ENCODE measurements at regions of chr18 and their contacts with region 1.

Region 1: DNA sequence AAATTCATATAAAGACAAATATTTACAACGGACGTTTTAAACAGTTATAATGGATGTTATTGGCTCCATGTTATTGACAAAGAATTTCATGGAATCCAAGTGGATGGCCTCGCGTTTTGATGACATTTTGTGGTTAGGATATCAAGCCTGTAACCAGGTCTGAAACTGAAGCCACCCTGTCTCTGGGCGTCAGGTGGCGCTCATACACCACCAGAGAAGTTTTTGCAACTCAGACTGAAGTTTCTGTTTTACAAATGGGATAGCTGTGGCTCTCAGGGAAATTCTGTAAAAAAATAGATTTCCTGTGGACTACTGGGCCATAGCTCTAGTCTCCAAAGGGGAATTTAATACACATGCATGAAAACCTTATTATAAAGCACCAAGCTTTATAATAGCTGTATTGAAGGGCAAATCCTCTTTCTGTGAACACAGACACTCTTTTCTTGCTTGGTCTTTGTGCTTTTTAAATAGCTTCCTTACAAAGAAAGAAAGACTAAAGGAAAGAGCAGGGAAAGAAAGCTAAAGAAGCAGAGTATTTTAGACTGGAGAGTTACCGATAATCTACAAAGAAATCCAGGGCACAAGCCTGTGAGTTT is 86.7 kb downstream of the C18orf54 start:
- DNase-seq: no peak
- H3K4me3 ChIP-seq: no peak overlapping the region
- H3K27ac ChIP-seq: no peak overlapping the region
- H3K4me1 ChIP-seq: no peaks in the 10 kb centered on the region
- H3K27me3 ChIP-seq: no peaks in the 10 kb centered on the region
- CTCF ChIP-seq: peak; percentile 75 to 80 (median 77)

Region 2: DNA sequence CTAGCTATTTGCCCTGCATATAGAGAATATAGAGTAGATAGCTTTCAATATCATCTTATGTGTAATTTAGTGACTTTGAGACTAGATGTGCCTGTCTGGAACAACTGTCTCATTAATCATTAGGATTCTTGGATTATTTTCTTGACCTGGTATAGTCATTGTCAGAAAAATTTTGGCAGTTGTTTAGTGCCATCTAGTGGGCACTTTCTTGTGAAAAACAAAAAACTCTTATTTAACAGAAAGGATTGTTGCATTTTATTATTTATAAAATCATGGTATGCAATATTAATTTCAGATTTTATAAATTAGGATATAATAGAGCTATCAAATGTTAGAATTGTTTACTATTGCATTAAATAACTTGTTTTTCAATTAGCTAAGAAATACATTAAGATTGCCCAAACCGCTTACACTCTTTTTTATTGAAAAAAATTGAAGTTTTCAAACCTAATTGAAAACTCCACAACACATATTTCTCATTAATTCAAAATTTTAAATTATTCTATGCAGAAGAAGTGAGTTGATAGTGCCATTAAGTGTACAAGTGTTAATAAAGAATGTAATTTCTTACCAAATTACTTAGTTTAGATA is 227.0 kb after region 1 on chr18:
- dilution Hi-C with region 1: loop called (anchors 25 kb)
- DNase-seq: no peak
- H3K4me3 ChIP-seq: no peak overlapping the region
- H3K27ac ChIP-seq: no peak overlapping the region
- H3K4me1 ChIP-seq: no peaks in the 10 kb centered on the region
- H3K27me3 ChIP-seq: no peaks in the 10 kb centered on the region
- CTCF ChIP-seq: no peak

Region 3: DNA sequence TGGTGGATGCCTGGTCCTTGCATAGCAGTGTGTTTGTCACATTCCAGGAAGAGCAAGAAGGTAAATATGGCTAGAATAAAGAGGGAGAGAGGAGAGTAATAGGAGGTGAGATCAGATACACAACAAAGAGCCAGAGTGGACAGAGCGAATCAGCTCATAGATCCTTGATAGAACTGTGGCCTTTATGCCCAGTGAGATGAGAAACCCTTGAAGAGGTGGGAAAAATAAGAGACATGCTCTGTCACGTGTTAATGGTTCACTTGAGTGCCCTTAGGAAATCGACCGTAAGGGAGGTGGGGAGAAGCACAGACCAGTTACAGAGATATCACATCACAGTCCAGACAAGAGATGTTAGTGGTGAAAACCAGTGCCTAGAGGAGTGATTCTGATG is 299.2 kb after region 1 on chr18:
- dilution Hi-C with region 1: no loop called
- DNase-seq: no peak
- H3K4me3 ChIP-seq: no peak overlapping the region
- H3K27ac ChIP-seq: no peak overlapping the region
- H3K4me1 ChIP-seq: peaks cover 11% of the 10 kb centered on the region
- H3K27me3 ChIP-seq: no peaks in the 10 kb centered on the region
- CTCF ChIP-seq: no peak

Measured in keratinocyte (primary cell).